ENCODE measurements at regions of chr3 and their contacts with region 1.

Region 1: GRCh38 chr3:115692887-115693524 is 69.7 kb downstream of the GAP43 start:
- DNase-seq: peak; percentile 72
- H3K4me3 ChIP-seq: no peak overlapping the region
- H3K27ac ChIP-seq: no peak overlapping the region
- H3K4me1 ChIP-seq: no peaks in the 10 kb centered on the region
- H3K27me3 ChIP-seq: no peaks in the 10 kb centered on the region
- CTCF ChIP-seq: peak; percentile 75 to 77
- POLR2A ChIP-seq: no peak

Region 2: GRCh38 chr3:114827495-114827894 is 865.5 kb before region 1 on chr3:
- CTCF ChIA-PET with region 1: interaction called, 3 read pairs
- POLR2A ChIA-PET with region 1: no interaction called
- dilution Hi-C with region 1: no loop called
- intact Hi-C with region 1: loop called (anchors 1 kb)
- DNase-seq: peak; percentile 47
- H3K4me3 ChIP-seq: no peak overlapping the region
- H3K27ac ChIP-seq: no peak overlapping the region
- H3K4me1 ChIP-seq: no peaks in the 10 kb centered on the region
- H3K27me3 ChIP-seq: no peaks in the 10 kb centered on the region
- CTCF ChIP-seq: peak; percentile 18 to 45
- POLR2A ChIP-seq: no peak

Region 3: GRCh38 chr3:115040673-115041286 is 652.2 kb before region 1 on chr3:
- CTCF ChIA-PET with region 1: interaction called, 5 read pairs
- POLR2A ChIA-PET with region 1: no interaction called
- dilution Hi-C with region 1: no loop called
- intact Hi-C with region 1: loop called (anchors 1 kb)
- DNase-seq: peak; percentile 67
- H3K4me3 ChIP-seq: no peak overlapping the region
- H3K27ac ChIP-seq: no peak overlapping the region
- H3K4me1 ChIP-seq: no peaks in the 10 kb centered on the region
- H3K27me3 ChIP-seq: no peaks in the 10 kb centered on the region
- CTCF ChIP-seq: peak; percentile 58 to 59
- POLR2A ChIP-seq: no peak

Region 4: GRCh38 chr3:115388166-115388565 is 304.8 kb before region 1 on chr3:
- CTCF ChIA-PET with region 1: no interaction called
- POLR2A ChIA-PET with region 1: no interaction called
- dilution Hi-C with region 1: no loop called
- intact Hi-C with region 1: no loop called
- DNase-seq: no peak
- H3K4me3 ChIP-seq: no peak overlapping the region
- H3K27ac ChIP-seq: no peak overlapping the region
- H3K4me1 ChIP-seq: peaks cover 7% of the 10 kb centered on the region
- H3K27me3 ChIP-seq: peaks cover 0 to 2% of the 10 kb centered on the region in 2 experiments
- CTCF ChIP-seq: no peak
- POLR2A ChIP-seq: no peak

Region 5: DNA sequence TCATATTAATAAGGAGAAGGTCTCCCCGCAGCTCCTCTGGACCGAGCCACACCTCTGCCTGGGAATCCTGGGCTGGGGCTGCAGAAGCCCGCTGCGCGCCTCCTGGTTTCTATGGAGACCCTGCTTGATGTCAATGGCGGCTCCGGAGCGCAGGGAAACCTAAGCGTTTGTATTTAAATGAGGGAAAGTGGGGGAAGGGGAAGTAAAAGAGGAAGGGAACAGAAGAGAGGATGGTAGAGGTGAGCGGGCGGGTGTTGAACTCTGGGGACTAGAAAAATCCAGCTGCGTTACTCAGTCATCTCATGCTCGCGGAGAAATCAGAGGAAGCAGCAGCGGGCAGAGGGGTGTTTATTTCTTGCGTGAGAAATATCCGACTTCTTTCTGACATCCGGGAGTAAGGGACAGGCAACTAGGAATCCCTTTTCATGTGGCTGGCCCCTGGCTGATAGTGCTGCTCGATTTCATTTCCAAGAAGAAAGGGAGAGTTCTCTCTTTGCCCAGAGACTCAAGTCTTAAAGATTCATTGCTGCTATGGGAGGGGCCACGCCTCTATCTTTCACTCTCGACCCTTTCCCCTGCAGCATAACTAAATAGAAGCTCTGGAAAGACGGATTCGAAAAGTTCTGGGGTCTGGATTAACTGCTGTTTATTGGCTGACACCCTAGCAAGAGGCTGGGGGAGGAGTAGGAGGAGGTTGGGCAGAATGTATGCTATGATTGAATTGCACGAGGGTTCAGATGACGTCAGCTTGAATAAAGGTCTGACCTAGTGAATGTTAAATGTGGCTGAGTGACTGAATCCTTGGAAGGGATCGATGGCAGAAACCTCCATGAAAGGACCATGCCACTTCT is 180.2 kb before region 1 on chr3:
- CTCF ChIA-PET with region 1: no interaction called
- POLR2A ChIA-PET with region 1: no interaction called
- dilution Hi-C with region 1: no loop called
- intact Hi-C with region 1: loop called (anchors 10 kb)
- DNase-seq: peak; percentile 61
- H3K4me3 ChIP-seq: peak overlapping the region; percentile 41 to 83 (median 66)
- H3K27ac ChIP-seq: peak overlapping the region; percentile 66
- H3K4me1 ChIP-seq: peaks cover 12% of the 10 kb centered on the region
- H3K27me3 ChIP-seq: peaks cover 10 to 12% of the 10 kb centered on the region in 2 experiments
- CTCF ChIP-seq: no peak
- POLR2A ChIP-seq: no peak

Region 6: GRCh38 chr3:115658337-115659181 is 34.4 kb before region 1 on chr3:
- CTCF ChIA-PET with region 1: interaction called, 3 read pairs
- POLR2A ChIA-PET with region 1: no interaction called
- dilution Hi-C with region 1: no loop called
- intact Hi-C with region 1: loop called (anchors 1 kb)
- DNase-seq: peak; percentile 82
- H3K4me3 ChIP-seq: peak overlapping the region; percentile 74 to 91 (median 82)
- H3K27ac ChIP-seq: peak overlapping the region; percentile 80
- H3K4me1 ChIP-seq: peaks cover 12% of the 10 kb centered on the region
- H3K27me3 ChIP-seq: peaks cover 7 to 8% of the 10 kb centered on the region in 2 experiments
- CTCF ChIP-seq: no peak
- POLR2A ChIP-seq: peak; percentile 51

Region 7: GRCh38 chr3:115670911-115671310 is 22.1 kb before region 1 on chr3:
- CTCF ChIA-PET with region 1: no interaction called
- POLR2A ChIA-PET with region 1: no interaction called
- dilution Hi-C with region 1: no loop called
- intact Hi-C with region 1: no loop called
- DNase-seq: no peak
- H3K4me3 ChIP-seq: no peak overlapping the region
- H3K27ac ChIP-seq: no peak overlapping the region
- H3K4me1 ChIP-seq: no peaks in the 10 kb centered on the region
- H3K27me3 ChIP-seq: peaks cover 4 to 11% of the 10 kb centered on the region in 2 experiments
- CTCF ChIP-seq: no peak
- POLR2A ChIP-seq: no peak

Region 8: DNA sequence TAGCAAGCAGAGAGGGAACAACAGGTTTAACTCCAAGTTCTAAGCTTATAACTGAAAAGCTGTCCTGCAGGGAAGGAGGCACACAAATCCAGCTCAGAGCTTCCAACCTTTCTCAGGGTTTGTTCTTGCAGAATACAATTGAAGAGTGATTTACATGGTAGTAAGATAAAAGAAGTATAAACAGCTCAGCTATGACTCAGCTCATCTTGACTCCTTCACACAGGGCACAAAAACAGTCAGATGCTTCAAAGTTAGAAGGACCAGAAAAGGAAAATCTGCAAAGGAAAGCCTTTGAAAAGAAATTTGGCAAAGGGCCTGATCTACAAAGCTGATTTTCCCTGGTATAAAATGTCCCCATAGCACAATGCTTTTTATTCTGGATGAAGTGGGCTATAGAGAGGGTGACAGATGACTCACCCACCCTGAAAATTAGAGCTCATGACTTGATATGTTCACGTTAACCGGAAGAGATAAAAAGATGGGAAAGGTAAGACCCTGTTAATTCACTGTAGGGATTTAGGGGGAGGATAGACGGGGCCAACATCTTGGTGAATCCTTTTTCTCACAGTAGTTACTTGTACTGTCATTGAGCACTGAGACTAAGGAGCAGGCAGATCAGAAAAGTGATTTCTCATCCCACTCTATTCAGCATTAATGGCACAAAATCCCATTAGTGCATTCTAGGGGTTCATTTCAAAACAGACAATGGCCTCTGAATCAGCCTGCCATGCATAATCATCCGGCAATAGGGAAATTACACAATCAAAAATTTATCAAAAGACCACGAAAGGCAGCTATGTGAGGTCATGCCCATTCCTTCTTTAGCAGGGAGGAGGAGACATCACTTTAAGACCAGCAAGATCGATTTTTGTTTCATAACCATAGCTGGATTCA is 73.8 kb after region 1 on chr3:
- CTCF ChIA-PET with region 1: no interaction called
- POLR2A ChIA-PET with region 1: no interaction called
- dilution Hi-C with region 1: no loop called
- intact Hi-C with region 1: no loop called
- DNase-seq: no peak
- H3K4me3 ChIP-seq: no peak overlapping the region
- H3K27ac ChIP-seq: no peak overlapping the region
- H3K4me1 ChIP-seq: peaks cover 2% of the 10 kb centered on the region
- H3K27me3 ChIP-seq: peaks cover 0 to 7% of the 10 kb centered on the region in 2 experiments
- CTCF ChIP-seq: no peak
- POLR2A ChIP-seq: no peak

Region 9: DNA sequence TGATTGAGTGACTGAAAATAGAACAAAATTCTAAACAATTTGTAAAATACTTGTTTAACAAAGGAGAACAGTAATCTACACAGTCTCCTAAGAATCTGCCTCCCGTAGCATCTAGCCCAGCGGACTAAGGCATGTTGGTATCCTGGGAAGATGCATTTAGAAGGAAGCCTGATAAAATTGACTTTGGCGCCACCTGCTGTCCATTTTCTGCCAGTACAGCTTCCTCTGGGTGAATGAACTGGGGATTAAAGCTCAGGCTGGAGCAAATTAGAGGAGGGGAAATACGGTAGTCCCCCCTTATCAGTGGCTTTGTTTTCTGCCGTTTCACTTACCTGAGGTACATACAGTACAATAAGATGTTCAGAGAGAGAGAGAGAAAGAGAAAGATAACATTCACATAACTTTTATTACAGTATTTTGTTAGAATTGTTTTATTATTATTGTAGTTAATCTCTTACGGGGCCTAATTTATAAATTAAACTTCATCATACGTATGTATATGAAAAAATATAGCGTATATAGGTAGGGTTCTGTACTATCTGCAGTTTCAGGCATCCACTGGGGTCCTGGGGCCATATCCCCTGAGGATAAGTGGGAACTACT is 121.9 kb after region 1 on chr3:
- CTCF ChIA-PET with region 1: interaction called, 4 read pairs
- POLR2A ChIA-PET with region 1: no interaction called
- dilution Hi-C with region 1: no loop called
- intact Hi-C with region 1: loop called (anchors 1 kb)
- DNase-seq: peak; percentile 71
- H3K4me3 ChIP-seq: no peak overlapping the region
- H3K27ac ChIP-seq: no peak overlapping the region
- H3K4me1 ChIP-seq: no peaks in the 10 kb centered on the region
- H3K27me3 ChIP-seq: peaks cover 10 to 11% of the 10 kb centered on the region in 2 experiments
- CTCF ChIP-seq: peak; percentile 76 to 93
- POLR2A ChIP-seq: no peak

Measured in endothelial cell of umbilical vein (primary cell).